CD4-positive, alpha-beta memory T cell (primary cell): ENCODE measurements at regions of chr6 and their contacts with region 1.

Region 1: GRCh38 chr6:37169496-37170272 is at the start of gene PIM1:
- DNase-seq: peak; percentile 94 to 98 (median 95)
- H3K4me3 ChIP-seq: peak within 1 kb of the TSS; percentile 76 to 97
- H3K4me3 Mint-ChIP-seq: peak within 1 kb of the TSS; percentile 93 to 99 (median 94)
- H3K27ac ChIP-seq: peak within 1 kb of the TSS; percentile 74
- H3K27ac Mint-ChIP-seq: peak within 1 kb of the TSS; percentile 94 to 98 (median 96)
- H3K4me1 ChIP-seq: peaks cover 36% of the 10 kb centered on the region
- H3K4me1 Mint-ChIP-seq: peaks cover 23 to 54% (median 29%) of the 10 kb centered on the region in 4 donors
- H3K27me3 ChIP-seq: no peaks in the 10 kb centered on the region
- H3K27me3 Mint-ChIP-seq: no peaks in the 10 kb centered on the region
- total RNA-seq, gene PIM1: 124 to 125 TPM

Region 2: GRCh38 chr6:36885461-36886401 is 284.0 kb before region 1 on chr6 and contains the start of gene C6orf89:
- CTCF ChIA-PET with region 1: interaction called, 17 read pairs
- POLR2A ChIA-PET with region 1: interaction called, 12 read pairs
- intact Hi-C with region 1: loop called (anchors 1 kb)
- DNase-seq: peak; percentile 95 to 98 (median 97)
- H3K4me3 ChIP-seq: peak within 1 kb of the TSS; percentile 71 to 84
- H3K4me3 Mint-ChIP-seq: peak within 1 kb of the TSS; percentile 82 to 93 (median 90)
- H3K27ac ChIP-seq: peak within 1 kb of the TSS; percentile 85
- H3K27ac Mint-ChIP-seq: peak within 1 kb of the TSS; percentile 94 to 98 (median 96)
- H3K4me1 ChIP-seq: peaks cover 50% of the 10 kb centered on the region
- H3K4me1 Mint-ChIP-seq: peaks cover 23 to 51% (median 39%) of the 10 kb centered on the region in 4 donors
- H3K27me3 ChIP-seq: no peaks in the 10 kb centered on the region
- H3K27me3 Mint-ChIP-seq: no peaks in the 10 kb centered on the region
- total RNA-seq, gene C6orf89: 53.0 to 56.0 TPM

Region 3: GRCh38 chr6:37029249-37029971 is 140.3 kb before region 1 on chr6:
- CTCF ChIA-PET with region 1: interaction called, 627 read pairs
- POLR2A ChIA-PET with region 1: interaction called, 394 read pairs
- intact Hi-C with region 1: loop called (anchors 1 kb)
- DNase-seq: peak in 3 of 5 donors; percentile 19 to 39 (median 38)
- H3K4me3 ChIP-seq: no peak overlapping the region
- H3K4me3 Mint-ChIP-seq: peak overlapping the region in 1 of 8 donors; percentile 35
- H3K27ac ChIP-seq: no peak overlapping the region
- H3K27ac Mint-ChIP-seq: peak overlapping the region in 6 of 7 donors; percentile 10 to 82 (median 25)
- H3K4me1 ChIP-seq: peaks cover 17% of the 10 kb centered on the region
- H3K4me1 Mint-ChIP-seq: peaks cover 14 to 40% (median 30%) of the 10 kb centered on the region in 4 donors
- H3K27me3 ChIP-seq: no peaks in the 10 kb centered on the region
- H3K27me3 Mint-ChIP-seq: no peaks in the 10 kb centered on the region

Region 4: DNA sequence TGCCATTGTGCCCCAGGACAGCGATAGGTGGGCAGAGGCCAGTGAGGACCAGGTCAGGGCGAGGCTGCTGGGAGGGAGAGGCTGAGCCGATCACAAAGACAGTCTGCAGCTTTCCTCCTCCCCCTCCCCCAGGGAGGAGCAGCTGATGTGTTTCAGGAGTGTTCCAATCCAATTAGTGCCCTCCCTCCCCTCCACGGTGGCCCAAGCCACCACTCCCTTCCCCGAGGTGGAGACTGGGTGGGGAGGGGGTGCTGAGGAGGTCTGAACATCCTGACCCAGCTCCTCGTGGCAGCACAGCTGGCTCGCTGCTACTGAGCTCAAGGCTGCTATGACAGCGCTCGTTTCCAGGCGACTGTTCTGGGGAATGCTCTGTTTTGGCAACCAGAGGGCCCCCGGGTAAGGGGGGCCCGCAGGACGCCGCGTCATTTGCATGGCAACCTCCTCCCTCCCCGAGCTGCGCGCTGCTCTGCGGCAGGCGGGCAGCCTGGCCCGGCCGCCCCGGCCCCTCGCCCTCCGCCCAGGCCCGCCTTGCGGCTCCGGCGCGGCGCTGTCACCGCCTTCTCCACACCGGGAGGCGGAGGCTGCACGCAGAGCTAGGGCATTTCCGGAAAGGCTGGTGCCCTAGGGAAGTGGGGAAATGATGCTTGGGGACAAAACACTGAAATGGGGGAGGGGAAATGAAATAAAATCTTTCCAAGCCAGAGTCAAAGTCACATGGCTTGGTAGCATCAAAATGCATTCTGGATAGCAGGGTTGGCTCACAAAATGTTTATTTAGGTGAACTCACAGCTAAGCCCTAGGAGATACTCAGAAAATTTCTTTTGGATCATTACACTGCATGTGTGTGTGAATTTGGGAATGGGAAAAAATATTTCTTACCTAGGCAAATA is 67.2 kb before region 1 on chr6:
- CTCF ChIA-PET with region 1: interaction called, 15 read pairs
- POLR2A ChIA-PET with region 1: interaction called, 67 read pairs
- intact Hi-C with region 1: loop called (anchors 1 kb)
- DNase-seq: peak; percentile 79 to 86 (median 84)
- H3K4me3 ChIP-seq: peak overlapping the region; percentile 19 to 27
- H3K4me3 Mint-ChIP-seq: peak overlapping the region; percentile 68 to 85 (median 80)
- H3K27ac ChIP-seq: peak overlapping the region; percentile 65
- H3K27ac Mint-ChIP-seq: peak overlapping the region; percentile 80 to 96 (median 94)
- H3K4me1 ChIP-seq: peaks cover 22% of the 10 kb centered on the region
- H3K4me1 Mint-ChIP-seq: peaks cover 15 to 36% (median 27%) of the 10 kb centered on the region in 4 donors
- H3K27me3 ChIP-seq: no peaks in the 10 kb centered on the region
- H3K27me3 Mint-ChIP-seq: no peaks in the 10 kb centered on the region

Region 5: GRCh38 chr6:37155394-37156312 is 14.0 kb before region 1 on chr6:
- CTCF ChIA-PET with region 1: interaction called, 10 read pairs
- POLR2A ChIA-PET with region 1: interaction called, 7 read pairs
- intact Hi-C with region 1: loop called (anchors 2 kb)
- DNase-seq: peak in 2 of 5 donors; percentile 25 to 55
- H3K4me3 ChIP-seq: peak overlapping the region in 1 of 2 donors; percentile 16
- H3K4me3 Mint-ChIP-seq: peak overlapping the region in 7 of 8 donors; percentile 57 to 87 (median 80)
- H3K27ac ChIP-seq: no peak overlapping the region
- H3K27ac Mint-ChIP-seq: peak overlapping the region; percentile 66 to 92 (median 84)
- H3K4me1 ChIP-seq: peaks cover 23% of the 10 kb centered on the region
- H3K4me1 Mint-ChIP-seq: peaks cover 16 to 28% (median 21%) of the 10 kb centered on the region in 4 donors
- H3K27me3 ChIP-seq: no peaks in the 10 kb centered on the region
- H3K27me3 Mint-ChIP-seq: peaks cover 0 to 2% of the 10 kb centered on the region in 2 donors

Region 6: GRCh38 chr6:37190159-37190535 is 20.5 kb after region 1 on chr6:
- CTCF ChIA-PET with region 1: interaction called, 26 read pairs
- POLR2A ChIA-PET with region 1: interaction called, 93 read pairs
- intact Hi-C with region 1: no loop called
- DNase-seq: no peak
- H3K4me3 ChIP-seq: no peak overlapping the region
- H3K4me3 Mint-ChIP-seq: peak overlapping the region in 4 of 8 donors; percentile 10 to 52 (median 25)
- H3K27ac ChIP-seq: no peak overlapping the region
- H3K27ac Mint-ChIP-seq: peak overlapping the region in 3 of 7 donors; percentile 47 to 68 (median 57)
- H3K4me1 ChIP-seq: peaks cover 65% of the 10 kb centered on the region
- H3K4me1 Mint-ChIP-seq: peaks cover 30 to 55% (median 39%) of the 10 kb centered on the region in 4 donors
- H3K27me3 ChIP-seq: no peaks in the 10 kb centered on the region
- H3K27me3 Mint-ChIP-seq: no peaks in the 10 kb centered on the region

Region 7: DNA sequence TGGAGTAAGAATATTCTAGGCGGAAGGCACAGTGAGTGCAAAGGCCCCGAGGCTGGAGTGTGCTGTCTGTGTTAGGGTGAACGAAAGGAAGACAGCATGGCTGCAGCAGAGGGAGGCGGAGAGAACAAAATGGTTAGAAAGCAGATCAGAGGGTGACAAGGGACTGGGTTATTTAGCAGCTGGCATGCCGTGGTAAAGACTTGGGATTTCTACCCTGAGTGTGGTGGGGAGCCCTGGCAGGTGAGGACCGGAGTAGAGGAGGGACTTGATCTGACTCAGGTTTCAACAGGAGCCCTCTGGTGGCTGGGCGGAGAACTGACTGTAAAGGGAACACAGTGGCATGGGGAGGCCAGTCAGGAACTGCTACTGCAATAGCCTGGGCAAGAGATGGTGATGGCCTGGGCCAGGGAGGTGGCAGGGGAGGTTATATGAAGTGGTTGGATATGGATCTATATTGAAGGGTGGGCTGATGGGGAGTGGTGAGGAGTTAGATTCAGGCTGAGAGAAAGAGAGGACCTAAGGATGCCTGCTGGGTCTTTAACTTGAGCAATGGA is 38.3 kb after region 1 on chr6:
- CTCF ChIA-PET with region 1: interaction called, 315 read pairs
- POLR2A ChIA-PET with region 1: interaction called, 129 read pairs
- intact Hi-C with region 1: loop called (anchors 1 kb)
- DNase-seq: peak; percentile 80 to 90 (median 84)
- H3K4me3 ChIP-seq: no peak overlapping the region
- H3K4me3 Mint-ChIP-seq: peak overlapping the region; percentile 26 to 74 (median 54)
- H3K27ac ChIP-seq: no peak overlapping the region
- H3K27ac Mint-ChIP-seq: peak overlapping the region; percentile 57 to 98 (median 86)
- H3K4me1 ChIP-seq: peaks cover 48% of the 10 kb centered on the region
- H3K4me1 Mint-ChIP-seq: peaks cover 39 to 58% (median 48%) of the 10 kb centered on the region in 4 donors
- H3K27me3 ChIP-seq: no peaks in the 10 kb centered on the region
- H3K27me3 Mint-ChIP-seq: no peaks in the 10 kb centered on the region

Region 8: DNA sequence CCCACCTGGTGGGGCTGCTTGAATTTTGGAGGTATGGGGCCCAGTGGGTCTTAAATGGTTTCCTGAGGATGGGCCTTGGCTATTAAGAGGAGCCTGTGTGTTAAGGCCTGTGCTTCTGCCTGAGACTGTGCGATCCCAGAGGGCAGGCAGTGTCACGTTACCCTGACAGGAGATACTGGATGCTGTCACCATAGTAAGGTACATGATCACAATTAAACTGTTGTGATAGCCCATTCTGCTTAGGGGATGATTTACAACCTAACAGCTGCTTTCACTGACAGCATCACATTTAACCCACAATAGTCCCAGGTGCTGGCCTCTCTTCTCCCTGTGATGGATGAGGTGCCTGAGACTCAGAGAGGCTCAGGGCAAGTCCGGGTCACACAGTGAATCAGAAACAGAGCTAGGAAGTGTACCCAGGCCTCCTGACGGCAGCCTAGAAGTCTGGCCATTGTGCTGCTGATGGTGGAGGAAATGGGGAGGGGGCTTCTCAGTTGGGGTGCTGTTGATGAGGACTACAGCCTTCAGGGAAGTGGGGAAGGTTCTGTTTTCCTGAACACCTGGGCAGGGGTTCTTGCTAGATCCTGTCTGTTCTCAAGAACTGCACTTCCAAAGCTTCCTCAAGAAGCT is 430.7 kb after region 1 on chr6:
- CTCF ChIA-PET with region 1: no interaction called
- POLR2A ChIA-PET with region 1: no interaction called
- intact Hi-C with region 1: no loop called
- DNase-seq: no peak
- H3K4me3 ChIP-seq: no peak overlapping the region
- H3K4me3 Mint-ChIP-seq: no peak overlapping the region
- H3K27ac ChIP-seq: no peak overlapping the region
- H3K27ac Mint-ChIP-seq: no peak overlapping the region
- H3K4me1 ChIP-seq: no peaks in the 10 kb centered on the region
- H3K4me1 Mint-ChIP-seq: peaks cover 0 to 2% (median 0%) of the 10 kb centered on the region in 4 donors
- H3K27me3 ChIP-seq: no peaks in the 10 kb centered on the region
- H3K27me3 Mint-ChIP-seq: no peaks in the 10 kb centered on the region